Caco-2 (cell line): ENCODE measurements at regions of chr4 and their contacts with region 1.

Region 1: GRCh38 chr4:92387459-92388069 is 83.8 kb downstream of the GRID2 start:
- DNase-seq: peak in 1 of 2 experiments; percentile 24
- H3K4me3 ChIP-seq: no peak overlapping the region
- H3K4me3 Mint-ChIP-seq: no peak overlapping the region
- H3K27ac Mint-ChIP-seq: no peak overlapping the region
- H3K4me1 ChIP-seq: no peaks in the 10 kb centered on the region
- H3K4me1 Mint-ChIP-seq: no peaks in the 10 kb centered on the region
- H3K27me3 ChIP-seq: no peaks in the 10 kb centered on the region
- H3K27me3 Mint-ChIP-seq: no peaks in the 10 kb centered on the region
- CTCF ChIP-seq: peak; percentile 49 to 54

Region 2: GRCh38 chr4:90419124-90419711 is 1968.3 kb before region 1 on chr4:
- CTCF ChIA-PET with region 1: no interaction called
- POLR2A ChIA-PET with region 1: no interaction called
- intact Hi-C with region 1: loop called (anchors 1 kb)
- DNase-seq: peak in 1 of 2 experiments; percentile 5
- H3K4me3 ChIP-seq: no peak overlapping the region
- H3K4me3 Mint-ChIP-seq: no peak overlapping the region
- H3K27ac Mint-ChIP-seq: no peak overlapping the region
- H3K4me1 ChIP-seq: no peaks in the 10 kb centered on the region
- H3K4me1 Mint-ChIP-seq: no peaks in the 10 kb centered on the region
- H3K27me3 ChIP-seq: no peaks in the 10 kb centered on the region
- H3K27me3 Mint-ChIP-seq: no peaks in the 10 kb centered on the region
- CTCF ChIP-seq: peak; percentile 45 to 52

Region 3: GRCh38 chr4:91924625-91925024 is 462.9 kb before region 1 on chr4:
- CTCF ChIA-PET with region 1: no interaction called
- POLR2A ChIA-PET with region 1: no interaction called
- intact Hi-C with region 1: no loop called
- DNase-seq: no peak
- H3K4me3 ChIP-seq: no peak overlapping the region
- H3K4me3 Mint-ChIP-seq: no peak overlapping the region
- H3K27ac Mint-ChIP-seq: no peak overlapping the region
- H3K4me1 ChIP-seq: no peaks in the 10 kb centered on the region
- H3K4me1 Mint-ChIP-seq: no peaks in the 10 kb centered on the region
- H3K27me3 ChIP-seq: no peaks in the 10 kb centered on the region
- H3K27me3 Mint-ChIP-seq: no peaks in the 10 kb centered on the region
- CTCF ChIP-seq: no peak